AG04449 (cell line): ENCODE measurements at regions of chr11 and their contacts with region 1.

Region 1: DNA sequence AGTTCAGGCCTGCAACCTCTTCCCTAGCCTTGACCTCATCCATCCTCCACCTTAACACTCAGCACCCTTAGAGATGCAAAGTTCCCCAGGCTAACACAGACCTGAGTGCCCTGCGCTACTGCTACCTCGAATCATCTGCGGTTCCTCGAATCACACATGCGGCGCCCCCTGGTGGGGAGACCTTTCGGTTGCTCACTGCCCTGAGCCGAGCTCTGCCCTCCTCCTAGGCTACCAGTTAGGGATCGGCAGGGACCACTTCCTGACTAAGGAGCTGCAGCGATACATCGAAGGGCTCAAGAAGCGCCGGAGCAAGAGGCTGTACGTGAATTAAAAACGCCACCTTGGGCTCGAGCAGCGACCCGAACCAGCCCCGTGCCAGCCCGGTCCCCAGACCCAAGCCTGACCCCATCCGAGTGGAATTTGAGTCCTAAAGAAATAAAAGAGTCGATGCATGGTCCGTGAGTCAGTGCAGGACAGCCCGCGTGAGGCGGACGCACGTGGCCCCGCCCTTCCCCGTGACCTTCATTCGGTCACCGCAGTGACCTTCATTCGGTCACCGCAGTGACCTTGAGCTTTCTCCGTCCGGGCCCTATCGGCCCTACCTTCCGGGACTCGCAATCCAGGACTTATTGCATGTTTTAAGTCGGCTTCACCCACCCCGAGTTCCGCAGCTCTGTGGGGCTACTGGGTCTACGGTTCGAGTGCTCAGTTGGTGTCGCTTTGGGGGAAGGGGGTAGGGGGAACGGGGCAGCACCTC is 830 bp upstream of the ESRRA start:
- DNase-seq: no peak
- H3K4me3 ChIP-seq: peak overlapping the region; percentile 73
- CTCF ChIP-seq: peak; percentile 93

Region 2: GRCh38 chr11:64000026-64000739 is 304.3 kb before region 1 on chr11:
- CTCF ChIA-PET with region 1: interaction called, 13 read pairs
- POLR2A ChIA-PET with region 1: no interaction called
- DNase-seq: no peak
- H3K4me3 ChIP-seq: peak overlapping the region; percentile 36
- CTCF ChIP-seq: peak; percentile 86

Region 3: DNA sequence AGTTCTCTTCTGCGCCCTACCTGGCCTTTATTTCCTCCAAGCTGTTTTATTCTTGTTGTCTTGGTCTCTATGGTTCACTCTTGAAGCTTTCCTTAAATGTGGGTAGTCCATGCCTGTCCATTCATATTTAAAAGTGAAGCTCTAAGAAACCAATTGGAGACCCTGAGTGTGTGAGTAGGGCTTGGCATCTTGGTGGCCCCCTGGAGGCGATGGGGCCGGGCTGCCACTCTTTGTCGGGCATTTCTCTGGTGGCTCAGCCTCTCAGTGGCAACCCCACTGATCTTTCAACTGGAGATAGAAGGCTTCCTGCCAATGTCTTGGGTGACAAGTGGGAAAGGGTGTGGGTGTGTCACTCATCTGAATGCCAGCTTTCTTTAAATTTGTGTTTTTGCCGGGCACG is 87.6 kb before region 1 on chr11:
- CTCF ChIA-PET with region 1: interaction called, 23 read pairs
- POLR2A ChIA-PET with region 1: no interaction called
- DNase-seq: no peak
- H3K4me3 ChIP-seq: no peak overlapping the region
- CTCF ChIP-seq: no peak

Region 4: DNA sequence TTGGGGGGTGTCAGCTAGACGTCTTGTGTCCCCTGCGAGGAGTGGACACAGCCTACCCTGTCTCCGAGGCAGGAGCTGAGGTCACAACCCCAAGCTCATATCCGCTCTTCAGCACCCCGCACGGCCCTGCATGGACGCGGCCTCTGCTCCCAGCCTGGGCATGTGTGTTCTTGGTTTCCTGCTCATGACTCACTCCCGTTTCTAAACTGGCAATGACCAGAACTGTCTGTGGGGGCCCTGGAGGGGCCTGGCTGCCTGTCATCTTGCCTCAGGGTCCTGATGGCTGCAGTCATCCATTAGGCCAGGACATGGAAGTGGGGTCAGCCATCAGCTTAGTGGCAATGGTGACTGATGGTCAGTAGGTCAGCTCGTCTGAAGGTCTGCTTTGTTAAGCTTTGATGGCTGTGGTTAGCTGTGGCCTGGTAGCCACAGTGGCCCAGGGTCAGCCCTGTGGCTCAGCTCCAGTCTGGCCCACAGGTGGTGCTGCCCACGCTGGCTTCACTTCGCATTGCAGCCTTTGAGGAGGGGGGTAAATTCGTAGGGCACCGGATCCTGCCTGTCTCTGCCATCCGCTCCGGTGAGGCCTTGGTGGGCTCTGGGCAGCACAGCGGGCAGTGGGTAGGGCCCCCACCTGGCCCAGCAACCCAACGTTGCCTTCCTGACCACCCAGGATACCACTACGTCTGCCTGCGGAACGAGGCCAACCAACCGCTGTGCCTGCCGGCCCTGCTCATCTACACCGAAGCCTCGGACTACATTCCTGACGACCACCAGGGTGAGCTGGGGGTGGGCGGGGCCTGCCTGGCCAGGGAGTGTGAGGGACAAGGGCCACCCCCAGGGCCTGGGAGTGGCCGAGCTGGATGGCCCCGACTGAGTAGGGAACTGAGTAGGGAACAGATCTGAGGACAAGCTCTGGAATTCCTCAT is 41.2 kb before region 1 on chr11:
- CTCF ChIA-PET with region 1: interaction called, 107 read pairs
- POLR2A ChIA-PET with region 1: no interaction called
- DNase-seq: no peak
- H3K4me3 ChIP-seq: no peak overlapping the region
- CTCF ChIP-seq: no peak

Region 5: DNA sequence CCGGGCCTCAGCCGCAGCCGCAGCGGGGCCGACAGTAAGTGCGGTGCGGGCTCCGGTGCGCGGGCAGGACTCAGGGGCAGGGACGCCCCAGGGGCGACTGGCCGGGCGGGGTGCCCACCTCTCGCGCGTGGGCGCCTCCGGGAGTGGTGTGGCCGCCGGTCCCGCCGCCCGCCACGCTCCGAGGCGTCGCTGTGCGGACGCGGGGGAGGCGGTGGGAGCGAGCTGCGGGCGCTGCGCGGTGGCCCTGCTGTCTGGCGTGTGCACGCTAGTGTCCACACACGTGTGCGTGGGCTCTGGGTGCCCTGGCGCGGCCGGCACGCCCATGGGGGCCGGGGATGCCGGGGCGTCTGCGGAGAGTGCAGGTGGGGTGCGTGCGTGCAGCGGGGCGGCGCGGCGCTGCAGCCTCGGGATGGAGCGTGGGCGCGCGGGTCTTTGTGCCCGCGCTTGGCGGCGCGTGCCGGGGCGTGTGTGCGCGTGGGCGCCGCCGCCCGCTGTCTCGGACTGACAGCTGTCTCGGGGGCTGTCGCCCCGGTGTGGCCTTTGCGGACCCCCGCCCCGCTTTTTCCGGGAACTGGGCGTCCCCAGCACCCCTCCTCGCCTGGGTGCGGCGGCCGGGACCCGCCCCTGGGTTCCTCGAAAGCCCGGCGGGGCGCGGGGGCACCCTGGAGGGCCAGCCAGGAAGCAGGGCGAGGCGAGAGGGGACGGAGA is 12.6 kb before region 1 on chr11:
- CTCF ChIA-PET with region 1: interaction called, 166 read pairs
- POLR2A ChIA-PET with region 1: no interaction called
- DNase-seq: no peak
- H3K4me3 ChIP-seq: peak overlapping the region; percentile 29
- CTCF ChIP-seq: no peak

Region 6: DNA sequence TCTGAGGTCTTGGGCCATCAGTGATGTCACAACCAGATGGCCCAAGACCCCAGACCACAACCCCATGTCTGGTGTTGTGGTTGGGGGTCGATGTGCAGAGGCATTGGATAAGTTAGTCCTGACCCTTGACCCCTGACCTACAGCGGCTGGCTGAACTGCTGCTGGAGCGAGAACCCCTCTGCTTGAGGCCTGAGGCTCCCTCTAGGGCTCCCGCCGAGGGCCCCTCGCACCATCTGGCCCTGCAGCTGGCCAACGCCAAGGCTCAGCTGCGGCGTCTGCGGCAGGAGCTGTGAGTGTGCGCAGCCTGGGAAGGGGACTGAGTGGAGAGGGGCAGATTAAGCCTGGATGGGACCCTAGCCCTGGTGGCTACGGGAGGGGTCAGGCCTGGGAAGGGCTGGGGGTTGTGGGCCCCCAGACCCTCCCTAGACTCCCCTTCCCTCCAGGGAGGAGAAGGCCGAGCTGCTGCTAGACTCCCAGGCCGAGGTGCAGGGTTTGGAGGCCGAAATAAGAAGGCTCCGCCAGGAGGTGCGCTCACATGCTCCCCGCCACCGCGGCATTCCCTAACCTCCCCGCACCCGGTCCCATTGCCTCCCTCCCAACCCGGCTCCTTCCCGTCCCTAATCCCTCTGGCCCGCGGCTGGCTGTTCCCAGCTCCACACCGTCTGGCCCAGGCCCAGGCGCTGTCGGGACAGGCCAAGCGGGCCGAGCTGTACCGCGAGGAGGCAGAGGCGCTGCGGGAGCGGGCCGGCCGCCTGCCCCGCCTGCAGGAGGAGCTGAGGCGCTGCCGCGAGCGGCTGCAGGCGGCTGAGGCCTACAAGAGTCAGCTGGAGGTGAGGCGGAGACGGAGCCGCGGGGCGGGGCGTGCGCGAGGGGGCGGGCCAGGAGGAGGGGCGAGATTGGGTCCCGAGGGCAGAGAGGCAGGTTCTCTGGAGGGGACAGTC is 37.6 kb after region 1 on chr11:
- CTCF ChIA-PET with region 1: interaction called, 127 read pairs
- POLR2A ChIA-PET with region 1: interaction called, 4 read pairs
- DNase-seq: peak; percentile 28
- H3K4me3 ChIP-seq: peak overlapping the region; percentile 55
- CTCF ChIP-seq: peak; percentile 67

Region 7: DNA sequence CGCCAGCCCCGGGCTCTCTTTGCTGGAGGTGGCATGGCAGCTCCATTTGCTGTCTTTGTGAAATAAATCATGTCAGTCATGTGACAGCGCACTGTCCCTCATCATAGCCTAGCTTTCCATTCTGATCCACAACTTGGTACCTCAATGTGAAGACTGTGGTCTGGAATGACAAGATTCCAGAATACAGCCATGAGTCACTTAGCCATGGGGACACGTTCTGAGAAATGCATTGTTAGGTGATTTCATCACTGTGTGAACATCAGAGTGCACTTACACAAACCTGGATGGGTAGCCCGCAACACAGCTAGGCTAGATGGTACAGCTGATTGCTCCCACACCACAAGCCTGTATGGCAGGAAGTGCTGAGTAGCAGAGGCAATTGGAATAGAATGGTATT is 81.8 kb after region 1 on chr11:
- CTCF ChIA-PET with region 1: no interaction called
- POLR2A ChIA-PET with region 1: no interaction called
- DNase-seq: no peak
- H3K4me3 ChIP-seq: no peak overlapping the region
- CTCF ChIP-seq: no peak

Region 8: GRCh38 chr11:64538501-64539294 is 234.2 kb after region 1 on chr11:
- CTCF ChIA-PET with region 1: no interaction called
- POLR2A ChIA-PET with region 1: no interaction called
- DNase-seq: no peak
- H3K4me3 ChIP-seq: no peak overlapping the region
- CTCF ChIP-seq: no peak